ENCODE measurements at regions of chrX and their contacts with region 1.

Region 1: DNA sequence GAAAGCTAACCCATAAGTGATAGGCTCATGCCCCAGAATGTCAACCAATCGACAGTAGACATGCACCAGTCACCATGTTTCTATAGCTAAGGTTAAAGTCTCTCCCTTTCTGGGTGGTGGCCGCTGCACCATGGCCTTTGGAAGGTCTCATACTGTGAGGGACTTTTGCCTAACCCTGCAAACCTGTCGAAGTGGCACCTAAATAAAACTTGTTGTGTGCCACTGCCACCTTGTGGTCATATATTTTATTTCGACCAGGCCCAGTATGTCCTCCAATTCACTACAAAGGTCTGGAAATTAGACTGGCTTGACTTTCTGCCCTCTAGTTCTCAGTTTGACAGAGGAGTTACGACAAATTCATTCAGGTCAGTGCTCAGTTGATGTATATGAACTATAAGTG is 163.1 kb downstream of the SMARCA1 start:
- DNase-seq: peak; percentile 43 to 61
- H3K4me3 ChIP-seq: no peak overlapping the region
- H3K4me3 Mint-ChIP-seq: no peak overlapping the region
- H3K27ac Mint-ChIP-seq: no peak overlapping the region
- H3K4me1 ChIP-seq: no peaks in the 10 kb centered on the region
- H3K4me1 Mint-ChIP-seq: peaks cover 9% of the 10 kb centered on the region
- H3K27me3 ChIP-seq: no peaks in the 10 kb centered on the region
- H3K27me3 Mint-ChIP-seq: no peaks in the 10 kb centered on the region
- CTCF ChIP-seq: peak; percentile 21 to 31

Region 2: DNA sequence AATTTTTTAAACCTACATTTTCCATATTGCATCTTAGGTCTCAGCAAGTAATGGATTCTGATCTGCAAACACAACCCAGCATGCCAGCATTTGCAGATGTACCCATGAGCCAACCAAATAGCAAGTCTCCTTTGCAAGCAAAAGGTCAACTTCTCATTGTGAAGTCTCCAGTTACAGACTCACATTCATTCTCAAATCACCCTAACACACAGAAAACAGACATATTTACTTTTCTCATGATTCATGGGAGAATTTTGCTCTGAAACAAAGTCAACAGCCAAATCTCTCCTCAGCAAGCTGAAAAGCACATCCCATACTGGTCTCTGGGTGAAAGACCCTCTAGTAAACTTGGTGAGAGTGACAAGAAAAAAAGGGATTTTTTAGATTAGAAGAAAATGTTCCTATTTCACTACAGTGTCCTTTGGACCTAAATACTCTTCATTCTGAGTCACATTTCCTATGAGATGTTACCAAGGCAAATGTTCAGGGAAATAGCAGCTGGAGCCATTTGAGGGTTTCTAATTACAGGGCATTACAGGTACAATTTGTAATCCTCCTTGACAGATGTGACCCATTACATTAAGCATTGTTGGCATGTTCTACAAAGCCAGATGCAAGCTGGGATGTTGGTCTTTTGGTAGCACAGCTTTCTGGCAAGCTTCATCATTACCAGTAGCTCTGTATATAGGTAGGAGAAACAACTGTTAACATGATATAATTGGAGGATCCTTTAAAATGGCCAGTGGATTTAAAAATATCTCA is 220.2 kb before region 1 on chrX:
- CTCF ChIA-PET with region 1: no interaction called
- POLR2A ChIA-PET with region 1: no interaction called
- intact Hi-C with region 1: loop called (anchors 5 kb)
- DNase-seq: no peak
- H3K4me3 ChIP-seq: no peak overlapping the region
- H3K4me3 Mint-ChIP-seq: no peak overlapping the region
- H3K27ac Mint-ChIP-seq: no peak overlapping the region
- H3K4me1 ChIP-seq: peaks cover 16% of the 10 kb centered on the region
- H3K4me1 Mint-ChIP-seq: peaks cover 10% of the 10 kb centered on the region
- H3K27me3 ChIP-seq: no peaks in the 10 kb centered on the region
- H3K27me3 Mint-ChIP-seq: no peaks in the 10 kb centered on the region
- CTCF ChIP-seq: no peak

Region 3: DNA sequence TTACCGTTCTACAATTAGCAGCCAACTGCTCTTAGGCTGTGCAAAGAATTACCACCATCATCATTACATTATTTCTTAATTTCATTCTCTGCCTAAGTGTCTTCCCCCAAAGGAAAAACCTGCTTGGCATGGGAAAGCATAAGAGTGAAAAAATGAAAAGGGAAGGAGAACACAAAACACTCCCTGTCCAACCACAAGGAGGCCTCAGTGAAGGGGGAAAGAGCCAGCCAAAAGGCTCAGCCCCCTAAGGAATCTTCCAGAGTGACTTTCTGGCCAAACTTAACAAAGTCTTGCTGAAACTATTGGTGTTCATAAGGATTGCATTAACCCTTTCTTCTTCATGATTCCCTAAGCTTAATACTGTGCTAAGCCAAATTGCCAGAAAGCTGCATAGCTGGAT is 124.3 kb before region 1 on chrX:
- CTCF ChIA-PET with region 1: no interaction called
- POLR2A ChIA-PET with region 1: no interaction called
- intact Hi-C with region 1: loop called (anchors 1 kb)
- DNase-seq: no peak
- H3K4me3 ChIP-seq: no peak overlapping the region
- H3K4me3 Mint-ChIP-seq: no peak overlapping the region
- H3K27ac Mint-ChIP-seq: no peak overlapping the region
- H3K4me1 ChIP-seq: no peaks in the 10 kb centered on the region
- H3K4me1 Mint-ChIP-seq: no peaks in the 10 kb centered on the region
- H3K27me3 ChIP-seq: no peaks in the 10 kb centered on the region
- H3K27me3 Mint-ChIP-seq: no peaks in the 10 kb centered on the region
- CTCF ChIP-seq: no peak

Region 4: DNA sequence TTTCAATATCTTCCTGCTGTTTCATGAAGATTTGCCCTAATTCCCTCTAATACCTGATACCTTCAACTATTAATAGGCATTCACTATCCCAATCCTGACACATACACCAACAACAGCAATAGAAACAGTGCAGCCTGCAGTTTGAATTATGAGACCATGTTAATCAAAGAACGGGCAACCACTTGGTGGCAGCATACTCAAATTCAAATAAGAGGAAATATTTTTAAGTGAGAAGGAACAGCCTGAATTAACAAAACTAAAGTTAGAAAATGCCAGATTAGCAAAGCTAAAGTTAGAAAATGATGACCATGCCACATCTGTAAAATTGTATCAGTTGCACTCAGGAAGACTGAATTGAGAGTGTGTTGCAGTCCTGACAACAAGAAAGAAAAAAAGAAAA is 41.8 kb before region 1 on chrX:
- CTCF ChIA-PET with region 1: no interaction called
- POLR2A ChIA-PET with region 1: no interaction called
- intact Hi-C with region 1: loop called (anchors 1 kb)
- DNase-seq: peak in 1 of 2 experiments; percentile 13
- H3K4me3 ChIP-seq: no peak overlapping the region
- H3K4me3 Mint-ChIP-seq: no peak overlapping the region
- H3K27ac Mint-ChIP-seq: no peak overlapping the region
- H3K4me1 ChIP-seq: no peaks in the 10 kb centered on the region
- H3K4me1 Mint-ChIP-seq: no peaks in the 10 kb centered on the region
- H3K27me3 ChIP-seq: no peaks in the 10 kb centered on the region
- H3K27me3 Mint-ChIP-seq: peaks cover 2% of the 10 kb centered on the region
- CTCF ChIP-seq: peak; percentile 46 to 49

Region 5: GRCh38 chrX:129404430-129405008 is 44.3 kb after region 1 on chrX:
- CTCF ChIA-PET with region 1: no interaction called
- POLR2A ChIA-PET with region 1: no interaction called
- intact Hi-C with region 1: loop called (anchors 1 kb)
- DNase-seq: peak in 1 of 2 experiments; percentile 12
- H3K4me3 ChIP-seq: no peak overlapping the region
- H3K4me3 Mint-ChIP-seq: peak overlapping the region; percentile 38
- H3K27ac Mint-ChIP-seq: peak overlapping the region; percentile 53
- H3K4me1 ChIP-seq: peaks cover 11% of the 10 kb centered on the region
- H3K4me1 Mint-ChIP-seq: peaks cover 14% of the 10 kb centered on the region
- H3K27me3 ChIP-seq: no peaks in the 10 kb centered on the region
- H3K27me3 Mint-ChIP-seq: no peaks in the 10 kb centered on the region
- CTCF ChIP-seq: no peak

Region 6: DNA sequence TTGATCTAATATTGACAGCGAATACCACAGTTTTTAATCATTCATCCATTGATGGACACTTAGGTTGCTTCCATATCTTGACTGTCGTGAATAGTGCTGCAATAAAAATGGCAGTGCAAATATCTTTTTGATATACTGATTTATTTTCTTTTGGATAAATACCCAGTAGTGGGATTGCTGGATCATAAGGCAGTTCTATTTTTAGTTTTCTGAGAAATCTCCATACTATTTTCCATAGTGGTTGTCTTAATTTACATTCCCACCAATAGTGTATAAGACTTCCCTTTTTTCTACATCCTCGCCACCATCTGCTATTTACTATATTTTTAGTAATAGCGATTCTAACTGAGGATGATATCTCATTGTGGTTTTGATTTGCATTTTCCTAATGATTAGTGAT is 63.0 kb after region 1 on chrX:
- CTCF ChIA-PET with region 1: no interaction called
- POLR2A ChIA-PET with region 1: no interaction called
- intact Hi-C with region 1: no loop called
- DNase-seq: no peak
- H3K4me3 ChIP-seq: no peak overlapping the region
- H3K4me3 Mint-ChIP-seq: no peak overlapping the region
- H3K27ac Mint-ChIP-seq: no peak overlapping the region
- H3K4me1 ChIP-seq: no peaks in the 10 kb centered on the region
- H3K4me1 Mint-ChIP-seq: no peaks in the 10 kb centered on the region
- H3K27me3 ChIP-seq: no peaks in the 10 kb centered on the region
- H3K27me3 Mint-ChIP-seq: no peaks in the 10 kb centered on the region
- CTCF ChIP-seq: no peak

Region 7: DNA sequence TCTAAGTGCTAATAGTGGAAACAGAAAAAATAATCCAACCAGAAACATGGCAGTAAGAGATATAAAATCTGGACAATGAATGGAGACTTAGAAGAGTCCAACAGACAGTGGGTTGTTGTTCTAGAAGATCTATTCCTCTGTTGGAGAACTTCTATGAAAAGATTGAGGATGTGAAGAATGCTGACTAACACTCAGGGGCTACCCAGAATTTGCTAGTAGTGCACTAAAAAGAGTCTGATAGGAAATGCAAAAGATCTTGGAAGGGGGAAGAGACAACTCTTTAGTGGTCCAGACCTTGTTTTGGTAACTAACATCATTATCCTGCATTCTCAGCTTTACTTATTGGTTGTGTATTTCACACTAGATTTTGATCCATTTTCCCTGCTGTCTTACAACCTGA is 85.3 kb after region 1 on chrX:
- CTCF ChIA-PET with region 1: no interaction called
- POLR2A ChIA-PET with region 1: no interaction called
- intact Hi-C with region 1: loop called (anchors 1 kb)
- DNase-seq: no peak
- H3K4me3 ChIP-seq: no peak overlapping the region
- H3K4me3 Mint-ChIP-seq: no peak overlapping the region
- H3K27ac Mint-ChIP-seq: no peak overlapping the region
- H3K4me1 ChIP-seq: peaks cover 10% of the 10 kb centered on the region
- H3K4me1 Mint-ChIP-seq: peaks cover 9% of the 10 kb centered on the region
- H3K27me3 ChIP-seq: no peaks in the 10 kb centered on the region
- H3K27me3 Mint-ChIP-seq: no peaks in the 10 kb centered on the region
- CTCF ChIP-seq: no peak

Region 8: DNA sequence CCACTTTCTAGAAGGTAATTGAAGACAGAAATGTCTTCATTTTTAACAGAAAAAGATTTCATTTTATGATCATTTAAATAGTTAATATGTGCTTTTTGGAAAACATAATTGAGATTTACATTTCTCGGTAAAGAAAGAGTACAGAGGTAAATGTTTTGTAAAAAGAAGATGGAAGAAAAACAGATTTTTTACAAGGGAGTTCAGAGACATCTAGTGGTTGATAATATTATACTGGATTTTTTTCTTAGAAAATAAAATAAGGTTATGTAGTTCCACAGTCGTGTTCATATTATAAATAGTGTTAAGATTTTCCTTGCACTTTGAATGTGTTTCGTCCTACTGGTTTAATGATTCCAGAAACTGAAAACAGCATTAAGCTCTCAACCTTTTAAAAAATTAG is 102.5 kb after region 1 on chrX:
- CTCF ChIA-PET with region 1: no interaction called
- POLR2A ChIA-PET with region 1: no interaction called
- intact Hi-C with region 1: loop called (anchors 1 kb)
- DNase-seq: no peak
- H3K4me3 ChIP-seq: no peak overlapping the region
- H3K4me3 Mint-ChIP-seq: no peak overlapping the region
- H3K27ac Mint-ChIP-seq: no peak overlapping the region
- H3K4me1 ChIP-seq: no peaks in the 10 kb centered on the region
- H3K4me1 Mint-ChIP-seq: no peaks in the 10 kb centered on the region
- H3K27me3 ChIP-seq: no peaks in the 10 kb centered on the region
- H3K27me3 Mint-ChIP-seq: no peaks in the 10 kb centered on the region
- CTCF ChIP-seq: no peak